A549 (cell line): ENCODE measurements at regions of chr5 and their contacts with region 1.

Region 1: DNA sequence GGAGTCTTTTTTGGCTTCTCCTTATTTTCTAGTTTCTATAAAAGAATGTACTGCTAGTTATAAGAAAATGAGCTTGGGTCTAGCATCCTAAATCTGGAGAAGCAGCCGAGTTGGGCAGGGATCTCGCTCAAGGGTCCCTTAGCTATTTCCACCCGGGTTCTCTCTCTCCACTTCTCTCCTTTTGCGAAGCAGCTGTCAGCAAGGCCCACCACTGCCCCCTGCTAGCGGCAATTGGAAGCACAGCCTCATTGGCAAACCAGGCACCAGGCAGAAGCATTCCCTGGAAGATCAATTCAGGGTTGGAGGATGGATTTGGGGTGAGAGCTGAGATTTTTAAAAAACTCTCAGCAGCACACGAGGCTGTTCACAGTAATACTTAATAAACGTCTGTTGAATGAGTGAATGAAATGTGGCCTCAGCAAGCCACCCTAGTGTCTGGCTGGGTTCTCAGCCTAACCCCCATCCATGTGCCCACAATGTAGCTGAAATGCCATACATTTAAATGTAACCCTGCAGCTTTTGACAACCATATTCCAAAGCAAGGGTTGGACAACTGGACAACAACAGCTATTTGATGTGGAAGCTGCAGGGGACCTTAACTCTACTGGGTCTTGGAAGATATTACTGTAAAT is 34.6 kb upstream of the TNIP1 start:
- DNase-seq: peak; percentile 65 to 85
- ATAC-seq: peak; percentile 82 to 91
- H3K4me3 ChIP-seq: no peak overlapping the region
- H3K27ac ChIP-seq: no peak overlapping the region
- H3K4me1 ChIP-seq: no peaks in the 10 kb centered on the region
- CTCF ChIP-seq: peak; percentile 95
- EP300 ChIP-seq: no peak
- POLR2A ChIP-seq: no peak
- RAD21 ChIP-seq: peak; percentile 98 to 99

Region 2: DNA sequence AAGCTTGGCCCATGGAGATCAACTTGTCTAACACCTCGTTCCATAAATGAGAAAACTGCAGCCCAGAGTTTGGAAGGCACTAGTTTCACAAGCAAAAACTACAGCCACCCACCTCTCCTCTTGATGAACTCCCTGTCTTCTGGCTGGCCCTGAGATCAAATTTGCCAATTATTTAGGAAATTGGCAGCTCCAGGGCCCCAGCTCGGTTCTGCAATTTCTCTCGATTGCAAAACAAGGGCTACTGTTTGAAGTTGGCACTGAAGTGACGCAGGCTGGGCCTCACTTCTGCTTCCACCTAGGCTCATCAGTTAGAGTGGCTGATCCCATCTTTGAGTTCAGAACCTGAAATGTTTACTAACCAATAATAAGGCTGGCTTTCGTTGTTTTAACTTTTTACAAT is 98.7 kb before region 1 on chr5:
- CTCF ChIA-PET with region 1: interaction called, 11 read pairs
- POLR2A ChIA-PET with region 1: no interaction called
- DNase-seq: no peak
- ATAC-seq: no peak
- H3K4me3 ChIP-seq: no peak overlapping the region
- H3K27ac ChIP-seq: no peak overlapping the region
- H3K4me1 ChIP-seq: no peaks in the 10 kb centered on the region
- CTCF ChIP-seq: no peak
- EP300 ChIP-seq: no peak
- POLR2A ChIP-seq: no peak
- RAD21 ChIP-seq: no peak

Region 3: DNA sequence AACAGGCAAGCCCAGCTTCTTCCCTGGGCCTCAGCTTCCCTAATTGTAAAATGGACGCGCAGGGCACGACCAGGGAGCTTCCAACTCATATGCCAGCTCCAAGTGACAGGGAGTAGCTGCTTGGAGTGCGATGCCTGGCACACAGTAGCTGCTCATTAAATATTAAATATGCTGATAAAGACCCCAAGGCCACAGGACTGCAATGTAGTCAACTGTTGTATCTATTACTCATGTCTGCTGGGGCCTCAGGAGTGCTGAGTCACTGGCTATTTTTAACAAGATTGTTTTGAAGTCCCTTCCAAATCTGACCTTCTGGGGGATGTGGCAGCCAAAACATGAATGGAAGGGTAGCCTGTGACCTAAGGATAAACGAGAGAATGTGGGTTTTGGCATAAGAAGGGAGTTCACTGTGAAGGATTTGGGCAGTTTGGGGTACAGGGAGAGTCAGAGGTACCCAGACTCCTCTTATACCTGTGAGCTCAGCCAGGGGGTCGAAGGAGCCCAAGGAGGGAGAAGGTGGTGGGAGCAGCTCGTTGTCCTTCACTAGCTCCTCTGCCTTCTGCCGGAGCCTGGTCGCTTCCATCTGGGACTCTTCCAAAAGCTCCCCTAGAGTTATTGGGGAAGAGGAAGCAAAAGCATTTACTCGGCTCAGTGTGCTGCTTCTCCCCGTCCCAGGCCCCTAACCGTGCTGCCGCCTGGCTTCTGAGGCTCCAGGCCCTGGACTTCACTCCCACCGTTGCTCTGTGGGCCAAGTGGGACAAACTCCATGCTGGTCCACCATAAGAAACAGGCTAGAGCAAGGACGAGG is 52.0 kb before region 1 on chr5:
- CTCF ChIA-PET with region 1: interaction called, 704 read pairs
- POLR2A ChIA-PET with region 1: no interaction called
- DNase-seq: peak; percentile 76 to 82
- ATAC-seq: peak; percentile 56 to 76
- H3K4me3 ChIP-seq: no peak overlapping the region
- H3K27ac ChIP-seq: peak overlapping the region; percentile 68 to 81
- H3K4me1 ChIP-seq: peaks cover 62% of the 10 kb centered on the region
- CTCF ChIP-seq: no peak
- EP300 ChIP-seq: no peak; a peak in 1 of 5 replicates
- POLR2A ChIP-seq: no peak
- RAD21 ChIP-seq: no peak

Region 4: DNA sequence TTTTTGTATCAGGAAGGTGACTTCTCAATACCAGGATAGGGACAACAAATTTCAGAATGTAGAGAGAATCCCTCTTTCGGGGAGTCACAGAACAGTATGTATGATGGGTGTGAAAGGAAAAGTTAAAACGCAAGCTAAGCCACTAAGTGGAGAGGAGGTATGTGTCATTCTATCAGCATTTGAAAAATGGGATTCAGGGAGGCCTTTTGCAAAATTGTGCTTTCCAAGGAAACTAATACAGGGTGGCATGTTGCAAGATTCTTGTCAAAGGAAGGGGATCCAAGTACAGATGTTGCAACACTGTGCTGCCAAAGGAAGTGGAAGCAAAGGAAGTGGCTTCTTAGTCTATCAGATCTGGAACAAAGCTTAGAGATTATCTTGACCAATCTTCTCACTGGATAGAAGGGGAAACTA is 21.9 kb before region 1 on chr5:
- CTCF ChIA-PET with region 1: interaction called, 53 read pairs
- POLR2A ChIA-PET with region 1: no interaction called
- DNase-seq: peak in 1 of 2 experiments; percentile 58
- ATAC-seq: peak; percentile 57 to 64
- H3K4me3 ChIP-seq: no peak overlapping the region
- H3K27ac ChIP-seq: peak overlapping the region; percentile 84 to 90
- H3K4me1 ChIP-seq: peaks cover 37% of the 10 kb centered on the region
- CTCF ChIP-seq: no peak
- EP300 ChIP-seq: peak; percentile 18 to 64; a peak in 2 of 5 replicates
- POLR2A ChIP-seq: no peak
- RAD21 ChIP-seq: no peak

Region 5: GRCh38 chr5:151134238-151134637 is 18.8 kb after region 1 on chr5:
- CTCF ChIA-PET with region 1: interaction called, 12 read pairs
- POLR2A ChIA-PET with region 1: no interaction called
- DNase-seq: no peak
- ATAC-seq: no peak
- H3K4me3 ChIP-seq: no peak overlapping the region
- H3K27ac ChIP-seq: no peak overlapping the region
- H3K4me1 ChIP-seq: no peaks in the 10 kb centered on the region
- CTCF ChIP-seq: no peak
- EP300 ChIP-seq: no peak
- POLR2A ChIP-seq: no peak
- RAD21 ChIP-seq: no peak